Heart right ventricle (tissue), 16 donors: ENCODE measurements at regions of chr3 and their contacts with region 1.

Region 1: GRCh38 chr3:63911873-63912767 is at the start of gene SCAANT1:
- DNase-seq: peak; percentile 92 to 93
- ATAC-seq: peak; percentile 92 to 95 (median 94)
- H3K4me3 ChIP-seq: peak within 1 kb of the TSS; percentile 66 to 97 (median 73)
- H3K27ac ChIP-seq: peak within 1 kb of the TSS; percentile 90 to 100 (median 98)
- H3K4me1 ChIP-seq: peaks cover 4 to 49% (median 38%) of the 10 kb centered on the region in 9 donors
- H3K27me3 ChIP-seq: no peaks in the 10 kb centered on the region
- CTCF ChIP-seq: peak in 3 of 9 donors; percentile 10 to 45 (median 22)
- total RNA-seq, gene SCAANT1: not detected

Region 2: GRCh38 chr3:63863148-63864007 is 48.7 kb before region 1 on chr3 and contains the starts of genes ATXN7 and THOC7:
- intact Hi-C with region 1: loop called in 6 of 10 experiments (anchors 5 kb)
- DNase-seq: peak; percentile 74 to 78
- ATAC-seq: peak; percentile 68 to 90 (median 84)
- H3K4me3 ChIP-seq: peak within 1 kb of the TSS; percentile 74 to 100 (median 96)
- H3K27ac ChIP-seq: peak within 1 kb of the TSS; percentile 80 to 98 (median 92)
- H3K4me1 ChIP-seq: peaks cover 0 to 25% (median 19%) of the 10 kb centered on the region in 9 donors
- H3K27me3 ChIP-seq: no peaks in the 10 kb centered on the region
- CTCF ChIP-seq: no peak
- total RNA-seq, gene ATXN7: 13.3 to 31.0 (median 22.4) TPM
- total RNA-seq, gene THOC7: 71.3 to 97.8 (median 79.4) TPM

Region 3: GRCh38 chr3:63872135-63872903 is 39.8 kb before region 1 on chr3:
- intact Hi-C with region 1: loop called in 4 of 10 experiments (anchors 5 kb)
- DNase-seq: no peak
- ATAC-seq: no peak
- H3K4me3 ChIP-seq: no peak overlapping the region
- H3K27ac ChIP-seq: no peak overlapping the region
- H3K4me1 ChIP-seq: peaks cover 0 to 44% (median 17%) of the 10 kb centered on the region in 9 donors
- H3K27me3 ChIP-seq: no peaks in the 10 kb centered on the region
- CTCF ChIP-seq: no peak

Region 4: GRCh38 chr3:63961891-63962290 is 49.8 kb after region 1 on chr3:
- intact Hi-C with region 1: loop called in 1 of 10 experiments (anchors 10 kb)
- DNase-seq: no peak
- ATAC-seq: peak in 2 of 8 donors; percentile 47 to 55
- H3K4me3 ChIP-seq: no peak overlapping the region
- H3K27ac ChIP-seq: no peak overlapping the region
- H3K4me1 ChIP-seq: peaks cover 0 to 60% (median 44%) of the 10 kb centered on the region in 9 donors
- H3K27me3 ChIP-seq: no peaks in the 10 kb centered on the region
- CTCF ChIP-seq: peak; percentile 46 to 72 (median 60)

Region 5: DNA sequence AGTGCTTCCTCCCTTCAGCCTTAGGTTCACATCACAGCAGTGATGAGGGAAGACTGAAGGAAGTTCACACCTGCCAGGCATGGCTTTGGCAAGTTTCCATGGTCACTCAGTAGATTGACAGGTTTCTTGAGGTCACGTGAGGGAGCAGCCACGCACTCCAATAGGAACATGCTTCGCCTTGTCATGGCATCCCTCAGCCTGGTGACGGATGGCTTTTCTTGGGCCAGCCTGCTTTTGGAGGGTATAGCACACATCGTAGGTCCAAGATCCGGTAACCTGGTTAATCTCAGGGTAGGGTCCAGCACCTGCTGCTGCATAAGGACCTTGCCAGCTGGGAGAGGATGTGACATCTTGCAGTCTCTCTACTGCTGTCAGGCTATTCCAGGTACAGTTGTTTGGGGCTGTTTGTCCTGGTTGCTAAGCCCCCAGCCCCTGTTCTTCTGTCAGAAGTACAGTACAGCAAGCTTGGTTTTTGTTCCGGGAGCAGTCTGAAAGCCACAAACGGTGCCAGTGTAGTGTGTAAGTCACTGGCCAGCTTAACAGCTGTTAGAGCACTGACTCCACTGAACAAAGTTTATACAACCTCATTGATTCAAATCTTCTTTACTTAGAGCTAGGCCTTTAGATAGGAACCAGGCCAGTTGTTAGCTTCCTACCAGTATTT is 68.8 kb after region 1 on chr3:
- intact Hi-C with region 1: loop called in 1 of 10 experiments (anchors 5 kb)
- DNase-seq: no peak
- ATAC-seq: peak in 3 of 8 donors; percentile 13 to 73 (median 55)
- H3K4me3 ChIP-seq: no peak overlapping the region
- H3K27ac ChIP-seq: no peak overlapping the region
- H3K4me1 ChIP-seq: peaks cover 0 to 51% (median 26%) of the 10 kb centered on the region in 9 donors
- H3K27me3 ChIP-seq: no peaks in the 10 kb centered on the region
- CTCF ChIP-seq: no peak

Region 6: DNA sequence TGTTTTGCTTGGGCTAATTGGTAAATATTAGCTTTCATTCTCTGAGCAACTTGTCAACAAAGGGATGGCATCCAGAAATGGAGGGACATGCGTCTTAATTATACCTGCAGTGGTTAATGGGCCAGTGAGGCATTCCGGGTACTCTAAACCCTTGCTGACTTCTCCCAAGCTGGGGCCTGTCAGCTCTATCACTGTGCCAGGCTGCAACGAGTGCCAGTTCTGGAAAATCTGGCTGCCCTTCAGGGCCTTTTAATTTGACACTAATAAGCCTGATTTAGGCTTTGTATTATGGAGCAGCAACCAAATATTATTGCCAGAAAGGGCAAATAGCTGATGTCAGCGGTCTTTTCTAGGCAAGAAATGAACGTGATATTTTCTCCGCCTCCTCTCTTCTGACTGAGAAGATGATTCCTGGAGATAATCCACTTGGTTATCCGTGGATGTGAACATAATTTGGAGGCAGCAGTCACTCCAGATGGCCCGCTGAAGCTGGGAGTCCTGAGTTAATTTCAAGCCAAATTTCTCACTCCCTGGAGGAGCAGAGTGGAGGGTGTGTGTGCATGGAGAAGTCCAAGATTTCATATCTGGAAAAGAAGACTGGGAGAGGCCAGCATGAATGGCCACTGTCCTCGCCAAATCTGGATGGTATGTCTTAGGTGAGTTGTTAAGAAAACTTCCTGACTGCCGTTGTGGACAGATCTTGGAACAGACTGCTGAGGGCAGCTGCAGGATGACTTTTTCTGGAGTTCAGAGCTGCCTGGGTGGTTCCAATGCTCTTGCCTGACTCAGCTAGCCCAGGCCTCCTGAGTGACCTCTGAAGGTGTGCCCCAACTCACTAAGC is 155.6 kb after region 1 on chr3:
- intact Hi-C with region 1: no loop called
- DNase-seq: no peak
- ATAC-seq: peak in 6 of 8 donors; percentile 46 to 73 (median 66)
- H3K4me3 ChIP-seq: no peak overlapping the region
- H3K27ac ChIP-seq: peak overlapping the region in 2 of 10 donors; percentile 9 to 11
- H3K4me1 ChIP-seq: peaks cover 0 to 19% (median 9%) of the 10 kb centered on the region in 9 donors
- H3K27me3 ChIP-seq: no peaks in the 10 kb centered on the region
- CTCF ChIP-seq: no peak